Endothelial cell of umbilical vein (primary cell): ENCODE measurements at regions of chr7 and their contacts with region 1.

Region 1: GRCh38 chr7:121909716-121910345 is 36.9 kb downstream of the PTPRZ1 start:
- DNase-seq: no peak
- H3K4me3 ChIP-seq: no peak overlapping the region
- H3K27ac ChIP-seq: no peak overlapping the region
- H3K4me1 ChIP-seq: no peaks in the 10 kb centered on the region
- H3K27me3 ChIP-seq: peaks cover 0 to 2% of the 10 kb centered on the region in 2 experiments
- CTCF ChIP-seq: no peak
- POLR2A ChIP-seq: no peak

Region 2: DNA sequence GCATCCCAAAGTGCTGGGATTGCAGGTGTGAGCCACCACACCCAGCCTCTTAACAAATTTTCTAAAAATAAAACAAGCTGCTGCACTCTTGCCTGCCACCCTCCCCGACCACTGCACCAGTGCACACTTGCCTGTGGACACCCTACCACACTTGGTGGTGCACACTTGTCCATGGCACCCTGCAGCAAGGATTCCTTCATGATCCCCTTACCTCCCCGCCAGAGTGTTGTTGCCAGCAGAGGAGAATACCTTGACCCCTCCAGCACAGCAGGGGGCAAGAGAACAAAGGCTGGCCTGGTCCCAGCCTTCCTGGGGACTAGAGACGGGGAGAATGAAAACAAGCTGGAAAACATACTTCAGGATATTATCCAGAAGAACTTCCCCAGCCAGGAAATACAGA is 1702.8 kb before region 1 on chr7:
- CTCF ChIA-PET with region 1: no interaction called
- POLR2A ChIA-PET with region 1: no interaction called
- dilution Hi-C with region 1: no loop called
- intact Hi-C with region 1: loop called (anchors 5 kb)
- DNase-seq: no peak
- H3K4me3 ChIP-seq: no peak overlapping the region
- H3K27ac ChIP-seq: no peak overlapping the region
- H3K4me1 ChIP-seq: no peaks in the 10 kb centered on the region
- H3K27me3 ChIP-seq: no peaks in the 10 kb centered on the region
- CTCF ChIP-seq: no peak
- POLR2A ChIP-seq: no peak

Region 3: DNA sequence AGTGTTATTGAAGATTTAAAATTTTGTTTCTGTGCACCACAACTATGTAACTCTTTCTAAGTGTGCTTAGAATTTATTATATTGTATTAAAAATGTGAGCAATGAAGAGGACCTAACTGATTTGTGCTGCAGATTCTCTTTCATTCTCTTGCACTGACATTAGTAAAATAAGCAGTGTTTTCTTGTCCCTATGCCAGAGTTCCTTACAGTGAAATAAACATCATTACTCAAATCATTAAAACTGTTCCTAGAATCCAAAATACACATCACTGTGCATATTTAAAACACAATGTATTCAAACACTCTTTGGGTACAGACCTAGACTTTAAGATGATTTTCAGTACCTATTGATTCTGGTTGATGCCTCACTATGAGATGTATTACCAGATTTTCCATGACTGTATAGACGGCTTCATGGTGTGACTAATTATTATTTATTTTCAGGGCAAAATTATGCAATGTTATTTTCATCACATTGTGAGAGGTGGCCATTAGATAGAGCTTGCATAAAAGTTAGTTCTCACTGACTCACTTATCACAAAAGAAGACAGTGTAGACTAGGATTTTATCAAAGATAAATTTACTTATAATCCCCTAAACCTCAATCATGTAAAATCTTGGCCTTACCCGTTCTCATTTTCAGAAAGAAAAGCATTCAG is 56.6 kb after region 1 on chr7:
- CTCF ChIA-PET with region 1: no interaction called
- POLR2A ChIA-PET with region 1: no interaction called
- dilution Hi-C with region 1: no loop called
- intact Hi-C with region 1: no loop called
- DNase-seq: no peak
- H3K4me3 ChIP-seq: no peak overlapping the region
- H3K27ac ChIP-seq: no peak overlapping the region
- H3K4me1 ChIP-seq: no peaks in the 10 kb centered on the region
- H3K27me3 ChIP-seq: peaks cover 0 to 2% of the 10 kb centered on the region in 2 experiments
- CTCF ChIP-seq: no peak
- POLR2A ChIP-seq: no peak